ENCODE measurements at regions of chr1 and their contacts with region 1.

Region 1: DNA sequence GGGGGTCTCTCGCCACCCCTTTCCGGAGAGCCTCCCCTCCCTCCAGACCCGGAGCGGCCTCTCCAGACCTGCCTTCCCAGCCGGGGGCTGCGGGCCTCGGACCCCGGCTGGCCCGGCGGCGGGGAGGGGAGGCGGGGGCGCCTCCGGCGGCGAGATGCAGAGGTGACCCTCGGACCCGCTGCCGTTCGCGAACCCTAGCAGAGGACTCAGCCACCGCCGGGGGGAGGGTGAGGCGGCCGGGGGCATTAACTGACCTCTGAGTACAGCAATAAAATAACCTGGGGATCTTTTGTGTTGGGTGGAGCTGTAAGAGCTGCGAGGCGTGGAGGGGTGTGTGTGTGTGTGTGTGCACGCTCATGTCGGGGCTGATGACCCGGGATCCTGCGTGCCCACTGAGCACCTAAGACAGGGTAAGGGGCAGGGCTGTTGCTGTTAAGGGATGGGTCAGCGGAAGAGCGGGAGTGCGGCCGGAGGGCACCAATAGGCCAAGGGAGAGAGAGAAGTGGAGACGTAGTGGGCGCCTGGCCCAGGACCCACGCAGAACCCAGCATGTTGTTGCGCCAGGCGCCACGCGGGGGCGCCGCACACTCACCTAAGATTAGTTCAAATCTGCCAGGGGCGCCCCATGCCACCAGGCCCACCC is 6.3 kb downstream of the HAPLN2 start:
- DNase-seq: peak; percentile 50 to 62
- H3K4me3 ChIP-seq: peak overlapping the region; percentile 28
- H3K4me3 Mint-ChIP-seq: peak overlapping the region; percentile 64
- H3K27ac Mint-ChIP-seq: no peak overlapping the region
- H3K4me1 ChIP-seq: peaks cover 13% of the 10 kb centered on the region
- H3K4me1 Mint-ChIP-seq: peaks cover 17% of the 10 kb centered on the region
- H3K27me3 ChIP-seq: peaks cover 1% of the 10 kb centered on the region; the same call in 1 of the 2 replicates
- H3K27me3 Mint-ChIP-seq: peaks cover 21% of the 10 kb centered on the region
- CTCF ChIP-seq: peak; percentile 74 to 75

Region 2: GRCh38 chr1:156042828-156043227 is 582.7 kb before region 1 on chr1:
- CTCF ChIA-PET with region 1: no interaction called
- POLR2A ChIA-PET with region 1: no interaction called
- intact Hi-C with region 1: no loop called
- DNase-seq: no peak
- H3K4me3 ChIP-seq: no peak overlapping the region
- H3K4me3 Mint-ChIP-seq: no peak overlapping the region
- H3K27ac Mint-ChIP-seq: no peak overlapping the region
- H3K4me1 ChIP-seq: peaks cover 24% of the 10 kb centered on the region
- H3K4me1 Mint-ChIP-seq: peaks cover 7% of the 10 kb centered on the region
- H3K27me3 ChIP-seq: no peaks in the 10 kb centered on the region
- H3K27me3 Mint-ChIP-seq: no peaks in the 10 kb centered on the region
- CTCF ChIP-seq: no peak

Region 3: DNA sequence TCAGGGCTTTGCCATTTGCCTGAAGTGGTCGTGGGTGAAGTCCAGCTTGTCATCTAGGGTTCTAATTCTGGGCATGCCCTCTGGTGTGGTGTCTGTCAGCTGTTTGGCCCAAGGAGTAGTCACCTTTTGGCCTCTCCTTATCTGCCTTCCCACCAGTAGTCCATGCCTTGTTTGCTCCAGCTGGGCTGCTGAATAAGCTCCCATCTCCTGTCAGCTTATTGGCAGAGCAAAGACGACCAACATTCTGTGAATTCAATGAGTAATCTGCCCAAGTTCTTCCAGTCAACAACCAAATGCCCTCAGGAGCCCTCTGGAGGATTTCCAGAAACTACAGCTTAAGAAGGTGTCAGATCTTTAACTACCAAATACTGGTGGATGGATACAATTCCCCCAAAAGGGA is 23.4 kb after region 1 on chr1:
- CTCF ChIA-PET with region 1: interaction called, 13 read pairs
- POLR2A ChIA-PET with region 1: no interaction called
- intact Hi-C with region 1: no loop called
- DNase-seq: no peak
- H3K4me3 ChIP-seq: no peak overlapping the region
- H3K4me3 Mint-ChIP-seq: no peak overlapping the region
- H3K27ac Mint-ChIP-seq: no peak overlapping the region
- H3K4me1 ChIP-seq: no peaks in the 10 kb centered on the region
- H3K4me1 Mint-ChIP-seq: no peaks in the 10 kb centered on the region
- H3K27me3 ChIP-seq: no peaks in the 10 kb centered on the region
- H3K27me3 Mint-ChIP-seq: peaks cover 2% of the 10 kb centered on the region
- CTCF ChIP-seq: no peak

Region 4: GRCh38 chr1:156659994-156660751 is 34.6 kb after region 1 on chr1:
- CTCF ChIA-PET with region 1: interaction called, 10 read pairs
- POLR2A ChIA-PET with region 1: interaction called, 3 read pairs
- intact Hi-C with region 1: loop called (anchors 1 kb)
- DNase-seq: peak; percentile 95 to 97
- H3K4me3 ChIP-seq: peak overlapping the region; percentile 19
- H3K4me3 Mint-ChIP-seq: peak overlapping the region; percentile 77
- H3K27ac Mint-ChIP-seq: peak overlapping the region; percentile 92
- H3K4me1 ChIP-seq: peaks cover 43% of the 10 kb centered on the region
- H3K4me1 Mint-ChIP-seq: peaks cover 51% of the 10 kb centered on the region
- H3K27me3 ChIP-seq: no peaks in the 10 kb centered on the region
- H3K27me3 Mint-ChIP-seq: peaks cover 1% of the 10 kb centered on the region
- CTCF ChIP-seq: peak; percentile 98

Measured in Caco-2 (cell line).